OCI-LY7 (cell line): ENCODE measurements at regions of chr2 and their contacts with region 1.

Region 1: DNA sequence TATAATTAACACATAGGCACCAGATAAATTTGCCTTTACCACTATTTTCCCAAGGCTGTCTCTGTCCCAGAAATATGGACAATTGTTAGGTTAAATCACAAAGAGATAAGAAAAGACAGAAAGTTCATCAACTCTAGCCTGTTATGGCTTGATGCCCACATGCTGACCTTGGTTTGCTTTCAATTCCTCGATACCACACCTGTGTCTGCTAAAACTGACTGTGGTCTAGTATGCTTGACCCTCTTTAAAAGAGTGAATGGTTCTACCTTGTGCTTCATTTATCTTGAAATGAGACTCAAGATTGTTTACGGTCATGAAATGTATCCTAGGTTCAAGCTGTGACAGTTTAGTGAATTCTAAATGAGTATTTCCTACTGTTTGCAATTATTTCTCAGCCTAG is 909.0 kb upstream of the LRRTM1 start:
- DNase-seq: no peak
- H3K4me3 ChIP-seq: no peak overlapping the region
- H3K27ac ChIP-seq: no peak overlapping the region
- H3K4me1 ChIP-seq: no peaks in the 10 kb centered on the region
- CTCF ChIP-seq: no peak

Region 2: DNA sequence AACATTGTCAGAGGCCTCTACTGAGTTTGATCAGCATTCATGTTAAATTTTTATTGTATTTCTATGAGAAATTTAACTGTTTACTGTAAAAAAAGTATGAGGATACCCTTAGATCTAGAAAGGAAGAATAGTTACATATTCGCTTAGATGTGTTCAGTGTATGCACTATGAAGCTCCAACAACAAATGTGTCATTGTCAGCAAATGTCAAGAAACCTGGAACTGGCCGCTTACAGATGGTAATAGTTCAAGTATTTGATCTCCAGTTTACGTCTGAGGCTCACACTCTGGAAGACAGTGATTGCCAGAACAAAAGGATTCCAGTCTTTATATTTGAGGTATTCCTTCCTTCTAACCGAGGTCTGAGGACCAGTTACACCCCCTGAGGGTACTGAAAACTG is 12.2 kb after region 1 on chr2:
- CTCF ChIA-PET with region 1: no interaction called
- POLR2A ChIA-PET with region 1: no interaction called
- intact Hi-C with region 1: no loop called
- DNase-seq: no peak
- H3K4me3 ChIP-seq: no peak overlapping the region
- H3K27ac ChIP-seq: no peak overlapping the region
- H3K4me1 ChIP-seq: no peaks in the 10 kb centered on the region
- CTCF ChIP-seq: no peak

Region 3: DNA sequence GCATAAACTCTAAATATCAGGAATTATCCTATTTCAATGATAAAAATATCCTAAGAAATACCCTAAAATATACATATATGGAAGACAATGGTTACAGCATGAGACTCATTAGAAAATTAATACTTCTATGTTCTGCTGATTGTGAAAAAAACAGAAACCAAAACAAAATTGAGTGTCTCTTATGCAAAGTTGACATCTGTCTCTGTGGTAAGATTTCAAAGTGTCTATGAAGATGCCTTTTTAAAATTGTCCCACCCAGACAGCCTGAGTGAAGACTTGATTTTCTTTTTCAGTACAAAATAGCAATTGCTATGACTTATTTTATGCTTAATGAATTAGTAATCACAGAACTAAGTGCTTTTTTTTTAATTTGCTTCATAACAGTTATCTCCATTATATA is 459.3 kb after region 1 on chr2:
- CTCF ChIA-PET with region 1: no interaction called
- POLR2A ChIA-PET with region 1: no interaction called
- intact Hi-C with region 1: loop called (anchors 10 kb)
- DNase-seq: no peak
- H3K4me3 ChIP-seq: no peak overlapping the region
- H3K27ac ChIP-seq: no peak overlapping the region
- H3K4me1 ChIP-seq: no peaks in the 10 kb centered on the region
- CTCF ChIP-seq: no peak